ENCODE measurements at regions of chr7 and their contacts with region 1.

Region 1: DNA sequence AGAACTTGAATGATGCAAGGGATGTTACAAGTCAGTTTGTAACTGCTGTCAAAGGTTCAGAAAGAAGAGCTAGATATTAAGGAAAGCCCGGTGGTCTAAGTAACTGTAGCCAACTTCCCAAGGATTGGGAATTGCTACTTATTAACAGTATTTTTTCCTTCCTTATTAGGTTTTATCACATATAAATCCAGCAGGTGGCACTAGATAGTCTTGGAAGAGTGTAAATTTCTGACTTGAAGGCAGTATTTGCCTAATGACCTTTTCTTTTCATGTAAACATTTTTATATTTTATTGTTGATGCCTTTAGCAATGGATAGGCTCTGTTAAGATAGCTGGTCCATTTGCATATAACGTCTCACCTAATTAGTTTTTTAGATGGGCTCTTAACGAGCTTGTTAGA is 51.2 kb downstream of the ANLN start:
- DNase-seq: no peak
- H3K4me3 ChIP-seq: no peak overlapping the region
- H3K27ac ChIP-seq: no peak overlapping the region
- H3K27me3 ChIP-seq: no peaks in the 10 kb centered on the region
- CTCF ChIP-seq: peak; percentile 57

Region 2: DNA sequence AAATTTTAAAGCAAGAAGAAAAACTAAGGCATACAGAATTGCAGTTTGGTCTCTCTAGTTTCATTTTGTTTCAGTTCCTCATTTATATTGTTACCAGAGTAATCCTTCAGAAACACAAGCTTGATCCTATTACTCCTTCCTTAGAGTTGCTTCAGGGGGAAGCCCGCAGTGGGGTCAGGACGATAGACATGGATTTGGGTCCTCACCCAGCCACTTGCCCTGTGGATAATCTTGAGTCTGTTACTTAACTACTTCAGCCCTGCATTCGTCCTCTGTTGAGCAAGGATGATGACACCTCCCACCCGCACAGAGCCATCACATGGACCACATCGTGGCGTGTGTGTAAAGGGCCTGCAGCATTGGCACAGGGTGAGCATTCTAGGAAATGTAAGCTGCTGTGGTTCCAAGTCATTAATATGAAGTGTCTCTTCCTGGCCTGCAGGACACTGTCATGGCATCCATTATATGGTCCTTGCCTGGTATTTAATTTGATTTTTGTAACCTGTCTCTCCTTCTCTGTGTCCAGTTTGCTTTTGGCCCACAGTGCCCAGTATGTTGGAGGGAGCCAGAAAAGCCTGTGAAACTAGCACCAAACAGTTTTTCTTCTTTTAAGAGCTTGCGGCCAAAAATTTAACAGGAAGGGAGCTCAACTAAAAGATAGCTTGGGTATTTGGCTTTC is 176.6 kb before region 1 on chr7:
- CTCF ChIA-PET with region 1: no interaction called
- POLR2A ChIA-PET with region 1: no interaction called
- DNase-seq: no peak
- H3K4me3 ChIP-seq: no peak overlapping the region
- H3K27ac ChIP-seq: no peak overlapping the region
- H3K27me3 ChIP-seq: no peaks in the 10 kb centered on the region
- CTCF ChIP-seq: no peak

Region 3: GRCh38 chr7:36400630-36401029 is 40.2 kb before region 1 on chr7:
- CTCF ChIA-PET with region 1: interaction called, 11 read pairs
- POLR2A ChIA-PET with region 1: no interaction called
- DNase-seq: no peak
- H3K4me3 ChIP-seq: no peak overlapping the region
- H3K27ac ChIP-seq: no peak overlapping the region
- H3K27me3 ChIP-seq: no peaks in the 10 kb centered on the region
- CTCF ChIP-seq: no peak

Region 4: DNA sequence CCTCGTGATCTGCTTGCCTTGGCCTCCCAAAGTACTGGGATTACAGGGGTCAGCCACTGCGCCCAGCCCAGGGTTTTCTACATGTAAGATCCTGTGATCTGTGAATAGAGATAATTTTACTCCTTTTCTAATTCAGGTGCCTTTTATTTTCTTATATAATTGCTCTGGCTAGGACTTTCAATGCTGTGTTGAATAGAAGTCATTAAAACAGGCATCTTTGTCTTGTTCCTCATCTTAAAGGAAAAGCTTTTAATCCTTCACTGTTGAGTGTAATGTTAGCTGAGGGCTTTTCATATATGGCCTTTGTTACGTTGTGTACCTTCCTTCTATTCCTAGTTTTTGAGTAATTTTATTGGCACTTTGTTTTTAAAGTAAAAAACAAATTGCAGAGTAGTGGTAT is 24.6 kb before region 1 on chr7:
- CTCF ChIA-PET with region 1: interaction called, 13 read pairs
- POLR2A ChIA-PET with region 1: no interaction called
- DNase-seq: no peak
- H3K4me3 ChIP-seq: no peak overlapping the region
- H3K27ac ChIP-seq: no peak overlapping the region
- H3K27me3 ChIP-seq: no peaks in the 10 kb centered on the region
- CTCF ChIP-seq: no peak

Region 5: DNA sequence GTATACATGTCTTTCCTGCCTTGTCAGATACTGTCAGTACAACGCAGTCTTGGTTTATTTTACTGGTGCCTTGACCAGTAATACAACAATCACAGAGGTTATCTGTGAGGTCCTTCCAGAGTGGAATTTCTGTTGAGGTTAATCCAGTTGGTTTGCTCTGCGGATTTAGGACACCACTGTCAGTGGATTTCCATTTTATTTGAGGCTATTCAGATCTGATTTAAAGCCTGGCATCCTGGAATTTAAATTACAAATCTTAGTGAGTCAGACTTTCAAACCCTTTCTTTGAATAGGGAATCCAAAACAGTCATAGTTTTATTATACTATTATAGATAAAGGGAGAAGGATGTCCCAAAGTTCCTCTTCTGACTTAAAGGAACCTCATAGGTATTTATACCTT is 10.7 kb before region 1 on chr7:
- CTCF ChIA-PET with region 1: interaction called, 32 read pairs
- POLR2A ChIA-PET with region 1: no interaction called
- DNase-seq: no peak
- H3K4me3 ChIP-seq: no peak overlapping the region
- H3K27ac ChIP-seq: no peak overlapping the region
- H3K27me3 ChIP-seq: no peaks in the 10 kb centered on the region
- CTCF ChIP-seq: no peak

Region 6: DNA sequence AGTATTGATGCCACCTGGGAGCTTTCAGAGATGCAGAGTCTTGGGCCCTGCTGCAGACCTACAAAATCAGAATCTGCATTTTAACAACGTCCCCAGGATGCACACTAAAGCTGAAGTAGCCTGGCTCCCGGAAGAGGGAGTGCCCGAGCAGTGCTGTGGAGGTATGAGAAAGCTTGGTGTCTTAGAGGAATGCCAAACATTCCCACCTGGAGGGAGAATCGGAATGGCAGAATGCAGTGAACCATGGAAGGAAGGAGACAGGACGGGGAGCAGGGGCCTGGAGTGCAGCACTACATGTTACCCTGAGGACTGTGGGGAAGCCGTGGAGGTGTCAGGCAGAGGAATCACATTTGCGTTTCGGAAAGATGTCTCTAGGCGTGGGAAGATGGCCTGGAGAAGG is 192.5 kb after region 1 on chr7:
- CTCF ChIA-PET with region 1: no interaction called
- POLR2A ChIA-PET with region 1: no interaction called
- DNase-seq: no peak
- H3K4me3 ChIP-seq: no peak overlapping the region
- H3K27ac ChIP-seq: no peak overlapping the region
- H3K27me3 ChIP-seq: peaks cover 24% of the 10 kb centered on the region
- CTCF ChIP-seq: no peak

Region 7: DNA sequence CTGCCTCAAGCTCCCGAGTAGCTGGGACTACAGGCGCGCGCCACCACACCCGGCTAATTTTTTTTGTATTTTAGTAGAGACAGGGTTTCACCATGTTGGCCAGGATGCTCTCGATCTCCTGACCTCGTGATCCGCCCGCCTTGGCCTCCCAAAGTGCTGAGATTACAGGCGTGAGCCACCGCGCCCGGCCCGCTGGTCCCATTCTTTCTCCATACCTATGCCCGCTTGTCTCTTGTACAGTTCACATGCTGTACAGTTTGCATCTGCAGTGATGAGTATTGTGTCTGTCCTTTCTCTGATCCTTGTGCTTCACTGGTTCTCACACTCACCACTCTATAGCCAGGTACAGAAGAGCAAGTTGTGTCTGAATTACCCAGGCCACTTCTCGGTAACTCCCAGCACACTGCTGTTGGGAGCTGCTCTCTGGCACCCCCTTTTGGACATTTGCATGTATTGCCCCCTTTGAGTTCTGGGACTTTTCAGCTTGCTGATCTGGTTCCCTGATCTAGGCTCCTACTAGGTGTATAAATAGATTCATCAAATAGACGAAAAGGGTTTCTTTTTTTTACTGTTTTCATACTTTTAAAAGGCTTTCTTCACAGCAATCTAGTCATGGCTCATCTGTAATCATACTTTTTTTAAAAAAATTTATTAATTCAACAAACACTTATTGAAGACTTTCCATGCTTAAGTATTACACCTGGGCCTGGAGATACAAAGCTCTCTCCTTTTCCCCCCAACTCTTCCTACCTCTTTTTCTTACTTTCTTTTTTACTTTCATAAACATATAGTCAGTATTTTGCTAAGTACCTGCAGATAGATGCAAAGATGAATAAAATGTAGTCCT is 229.9 kb after region 1 on chr7:
- CTCF ChIA-PET with region 1: interaction called, 60 read pairs
- POLR2A ChIA-PET with region 1: no interaction called
- DNase-seq: peak; percentile 27
- H3K4me3 ChIP-seq: no peak overlapping the region
- H3K27ac ChIP-seq: no peak overlapping the region
- H3K27me3 ChIP-seq: peaks cover 2% of the 10 kb centered on the region
- CTCF ChIP-seq: peak; percentile 98

Region 8: GRCh38 chr7:36736899-36737211 is 296.0 kb after region 1 on chr7:
- CTCF ChIA-PET with region 1: no interaction called
- POLR2A ChIA-PET with region 1: no interaction called
- DNase-seq: no peak
- H3K4me3 ChIP-seq: no peak overlapping the region
- H3K27ac ChIP-seq: no peak overlapping the region
- H3K27me3 ChIP-seq: no peaks in the 10 kb centered on the region
- CTCF ChIP-seq: no peak

Region 9: DNA sequence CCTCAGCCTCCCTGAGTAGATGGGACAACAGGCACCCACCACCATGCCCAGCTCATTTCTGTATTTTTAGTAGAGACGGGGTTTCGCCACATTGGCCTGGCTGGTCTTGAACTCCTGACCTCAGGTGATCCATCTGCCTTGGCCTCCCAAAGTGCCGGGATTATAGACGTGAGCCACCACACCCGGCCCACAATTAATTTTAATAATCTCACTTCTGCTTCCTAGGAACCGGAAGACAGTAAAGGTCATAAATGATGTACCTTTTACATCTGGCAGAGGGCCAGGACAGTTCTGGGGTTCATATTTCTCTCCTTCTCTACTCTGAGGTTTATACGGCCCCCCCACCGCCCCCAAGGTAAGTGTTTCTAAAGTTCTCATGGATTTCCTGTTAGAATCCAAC is 314.6 kb after region 1 on chr7:
- CTCF ChIA-PET with region 1: no interaction called
- POLR2A ChIA-PET with region 1: no interaction called
- DNase-seq: no peak
- H3K4me3 ChIP-seq: no peak overlapping the region
- H3K27ac ChIP-seq: no peak overlapping the region
- H3K27me3 ChIP-seq: no peaks in the 10 kb centered on the region
- CTCF ChIP-seq: no peak

Measured in AG04450 (cell line).